ENCODE measurements at regions of chr6 and their contacts with region 1.

Region 1: DNA sequence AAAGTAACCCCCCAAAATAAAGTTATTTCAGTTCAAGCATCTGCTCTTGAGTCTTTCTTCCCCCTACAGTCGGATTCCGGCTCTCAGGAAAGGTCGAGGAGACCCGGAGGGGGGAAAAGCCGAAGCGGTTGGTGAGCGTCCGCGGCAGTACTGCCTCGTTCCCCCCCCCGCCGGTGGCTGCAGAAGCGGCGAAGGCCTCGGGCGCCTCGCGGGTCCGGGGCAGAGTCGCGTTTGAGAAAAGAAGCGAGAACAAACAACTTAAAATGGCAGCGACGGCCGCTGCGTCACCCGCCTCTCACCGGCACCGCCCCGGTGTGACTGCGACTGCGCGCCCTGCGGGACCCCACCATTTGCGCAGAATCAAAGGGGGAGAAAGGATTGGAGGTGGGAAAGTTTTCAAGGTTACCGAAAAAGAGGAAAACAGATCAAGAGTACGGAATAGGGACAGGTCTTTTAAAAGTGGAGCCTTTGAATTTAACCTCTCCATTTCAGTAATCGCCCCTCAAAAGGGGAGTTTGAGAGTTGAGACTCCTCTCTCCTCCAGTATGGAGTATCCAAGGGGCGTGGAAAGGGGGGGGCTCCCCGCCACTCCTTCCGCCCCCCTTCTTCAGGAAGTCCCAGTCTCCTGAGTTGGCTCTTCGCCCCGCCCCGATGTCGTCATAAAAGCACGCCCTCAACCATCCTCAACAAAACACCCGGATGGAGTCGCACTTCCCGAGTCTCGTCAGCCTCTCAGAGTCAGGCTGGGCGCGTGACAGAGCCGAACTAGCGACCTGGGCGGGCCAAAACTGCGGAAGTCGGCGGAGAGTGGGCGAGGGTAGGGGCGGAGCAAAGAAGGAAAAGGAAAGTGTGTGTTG is 1.9 kb upstream of the C6orf62 start:
- DNase-seq: peak; percentile 100
- ATAC-seq: peak; percentile 96
- H3K4me3 ChIP-seq: peak overlapping the region; percentile 90 to 99 (median 97)
- H3K27ac ChIP-seq: peak overlapping the region; percentile 94
- H3K4me1 ChIP-seq: peaks cover 34% of the 10 kb centered on the region
- H3K27me3 ChIP-seq: no peaks in the 10 kb centered on the region; a peak in 1 of 5 replicates
- CTCF ChIP-seq: peak; percentile 30
- EP300 ChIP-seq: peak; percentile 34 to 59; a peak in 3 of 4 replicates
- POLR2A ChIP-seq: peak; percentile 98
- RAD21 ChIP-seq: peak; percentile 52

Region 2: GRCh38 chr6:24699521-24700359 is 21.1 kb before region 1 on chr6:
- CTCF ChIA-PET with region 1: no interaction called
- POLR2A ChIA-PET with region 1: interaction called, 18 read pairs
- in situ Hi-C with region 1: no loop called
- intact Hi-C with region 1: no loop called
- DNase-seq: peak; percentile 21
- ATAC-seq: peak; percentile 5; the same call in 1 of the 3 replicates
- H3K4me3 ChIP-seq: no peak overlapping the region
- H3K27ac ChIP-seq: no peak overlapping the region
- H3K4me1 ChIP-seq: peaks cover 12% of the 10 kb centered on the region
- H3K27me3 ChIP-seq: no peaks in the 10 kb centered on the region
- CTCF ChIP-seq: no peak
- EP300 ChIP-seq: no peak
- POLR2A ChIP-seq: no peak
- RAD21 ChIP-seq: no peak

Region 3: DNA sequence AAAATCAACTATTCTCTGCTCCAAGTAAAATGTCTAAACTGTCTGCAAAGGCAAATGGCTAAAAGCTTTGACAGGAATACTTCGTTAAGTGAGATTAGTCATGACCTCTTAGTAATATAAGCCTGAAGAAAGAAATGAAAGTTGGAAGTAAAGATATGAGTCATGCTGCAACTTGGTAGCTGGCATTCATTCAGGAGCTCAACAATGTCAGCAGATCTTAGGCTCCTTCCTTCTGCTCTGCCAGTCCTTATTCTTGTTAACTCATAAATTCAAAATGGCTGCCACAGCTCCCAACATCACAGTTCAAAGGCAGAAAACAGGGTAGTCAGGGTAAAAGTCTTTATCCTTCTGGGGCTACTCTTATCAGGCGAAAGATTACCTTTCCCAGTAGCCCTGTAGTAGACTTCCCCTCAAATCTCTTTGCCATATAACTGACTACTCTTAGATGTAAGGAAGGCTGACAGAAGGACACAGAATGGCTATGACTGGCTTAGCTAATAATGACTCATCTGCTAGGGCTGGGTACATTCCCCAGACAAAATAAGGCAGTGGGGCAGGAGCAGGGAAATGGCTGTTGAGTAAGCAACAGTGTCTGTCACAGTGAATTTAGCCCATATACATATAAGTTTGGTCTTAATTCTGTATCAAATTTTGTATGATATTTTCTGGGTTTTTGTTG is 22.6 kb after region 1 on chr6:
- CTCF ChIA-PET with region 1: no interaction called
- POLR2A ChIA-PET with region 1: interaction called, 11 read pairs
- in situ Hi-C with region 1: no loop called
- intact Hi-C with region 1: no loop called
- DNase-seq: no peak
- ATAC-seq: peak; percentile 70
- H3K4me3 ChIP-seq: no peak overlapping the region
- H3K27ac ChIP-seq: no peak overlapping the region
- H3K4me1 ChIP-seq: no peaks in the 10 kb centered on the region
- H3K27me3 ChIP-seq: peaks cover 0 to 7% of the 10 kb centered on the region in 2 experiments; a peak in 1 of 5 replicates
- CTCF ChIP-seq: no peak
- EP300 ChIP-seq: no peak
- POLR2A ChIP-seq: no peak
- RAD21 ChIP-seq: no peak

Region 4: DNA sequence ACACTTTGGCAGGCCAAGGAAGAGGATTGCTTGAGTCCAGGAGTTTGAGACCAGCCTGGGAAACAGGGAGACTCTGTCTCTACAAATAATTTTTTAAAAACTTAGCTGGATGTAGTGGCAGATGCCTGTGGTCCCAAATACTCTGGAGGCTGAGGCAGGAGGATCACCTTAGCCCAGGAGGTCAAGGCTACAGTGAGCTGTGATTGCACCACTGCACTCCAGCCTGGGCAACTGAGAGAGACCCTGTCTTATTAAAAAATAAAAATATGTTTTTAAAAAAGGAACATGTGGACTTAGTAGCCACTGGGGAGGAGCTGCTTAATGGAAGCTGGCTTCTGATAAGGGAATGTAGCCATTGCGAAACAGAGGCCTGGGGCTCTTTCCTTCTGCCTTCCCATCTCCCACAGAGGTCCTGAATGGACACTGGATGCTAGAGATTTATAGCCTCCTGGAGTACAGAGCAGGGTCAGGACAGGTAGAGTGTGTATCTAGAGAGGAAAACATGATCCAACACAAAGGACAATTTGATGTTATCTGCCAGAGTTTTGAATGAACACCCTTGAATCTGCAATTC is 32.2 kb after region 1 on chr6:
- CTCF ChIA-PET with region 1: no interaction called
- POLR2A ChIA-PET with region 1: interaction called, 10 read pairs
- in situ Hi-C with region 1: no loop called
- intact Hi-C with region 1: no loop called
- DNase-seq: peak; percentile 32
- ATAC-seq: peak; percentile 77
- H3K4me3 ChIP-seq: no peak overlapping the region
- H3K27ac ChIP-seq: no peak overlapping the region
- H3K4me1 ChIP-seq: peaks cover 16% of the 10 kb centered on the region
- H3K27me3 ChIP-seq: peaks cover 0 to 6% of the 10 kb centered on the region in 2 experiments; a peak in 1 of 5 replicates
- CTCF ChIP-seq: no peak
- EP300 ChIP-seq: no peak
- POLR2A ChIP-seq: no peak
- RAD21 ChIP-seq: no peak

Region 5: DNA sequence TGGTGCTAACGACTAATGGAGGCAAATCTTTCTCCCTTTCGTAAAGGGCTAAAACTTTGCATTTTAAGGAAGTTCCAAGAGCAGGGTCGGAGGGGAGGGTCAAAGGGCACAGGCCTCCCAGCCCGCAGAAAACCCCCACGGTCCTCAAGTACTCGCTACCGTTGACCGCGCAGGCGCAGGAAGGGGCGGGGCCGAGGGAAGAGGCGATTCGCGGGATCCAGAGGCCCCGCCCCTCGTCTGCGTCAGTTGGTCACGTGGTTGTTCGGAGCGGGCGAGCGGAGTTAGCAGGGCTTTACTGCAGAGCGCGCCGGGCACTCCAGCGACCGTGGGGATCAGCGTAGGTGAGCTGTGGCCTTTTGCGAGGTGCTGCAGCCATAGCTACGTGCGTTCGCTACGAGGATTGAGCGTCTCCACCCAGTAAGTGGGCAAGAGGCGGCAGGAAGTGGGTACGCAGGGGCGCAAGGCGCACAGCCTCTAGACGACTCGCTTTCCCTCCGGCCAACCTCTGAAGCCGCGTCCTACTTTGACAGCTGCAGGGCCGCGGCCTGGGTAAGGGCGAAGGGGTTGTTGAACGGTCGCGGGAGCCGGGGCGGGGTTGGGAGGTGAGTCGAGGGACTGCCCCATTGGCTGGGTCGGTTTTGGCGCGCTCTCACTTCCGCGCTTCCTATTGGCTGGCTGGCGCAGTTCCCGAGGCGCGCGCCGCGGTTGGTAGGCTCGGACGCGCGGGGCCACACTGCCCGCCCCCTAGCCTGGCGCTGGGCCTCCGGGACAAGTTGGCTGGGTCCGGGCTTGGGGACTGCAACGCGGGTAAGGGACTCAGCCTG is 54.1 kb after region 1 on chr6 and contains the start of gene GMNN:
- CTCF ChIA-PET with region 1: no interaction called
- POLR2A ChIA-PET with region 1: interaction called, 22 read pairs
- in situ Hi-C with region 1: loop called (anchors 5 kb)
- intact Hi-C with region 1: loop called (anchors 1 kb)
- DNase-seq: peak; percentile 96
- ATAC-seq: peak; percentile 95
- H3K4me3 ChIP-seq: peak within 1 kb of the TSS; percentile 78 to 100 (median 99)
- H3K27ac ChIP-seq: peak within 1 kb of the TSS; percentile 99
- H3K4me1 ChIP-seq: peaks cover 67% of the 10 kb centered on the region
- H3K27me3 ChIP-seq: no peaks in the 10 kb centered on the region; a peak in 1 of 5 replicates
- CTCF ChIP-seq: peak; percentile 27
- EP300 ChIP-seq: 0 out of 4 replicates have a peak, but pooled peaks of 1 of the 2 experiments have one; percentile 14
- POLR2A ChIP-seq: peak; percentile 96 to 98
- RAD21 ChIP-seq: peak; percentile 44
- total RNA-seq, gene GMNN: 154 and 228 TPM in 2 replicates